Mammary epithelial cell (primary cell): ENCODE measurements at regions of chr1 and their contacts with region 1.

Region 1: GRCh38 chr1:87730274-87731216 is 401.9 kb downstream of the LMO4 start:
- DNase-seq: no peak
- H3K4me3 ChIP-seq: no peak overlapping the region
- H3K27ac ChIP-seq: no peak overlapping the region
- H3K4me1 ChIP-seq: no peaks in the 10 kb centered on the region
- H3K27me3 ChIP-seq: no peaks in the 10 kb centered on the region
- CTCF ChIP-seq: no peak

Region 2: GRCh38 chr1:87650306-87650705 is 80.2 kb before region 1 on chr1:
- CTCF ChIA-PET with region 1: no interaction called
- dilution Hi-C with region 1: loop called (anchors 5 kb)
- in situ Hi-C with region 1: no loop called
- intact Hi-C with region 1: no loop called
- DNase-seq: no peak
- H3K4me3 ChIP-seq: no peak overlapping the region
- H3K27ac ChIP-seq: no peak overlapping the region
- H3K4me1 ChIP-seq: no peaks in the 10 kb centered on the region
- H3K27me3 ChIP-seq: no peaks in the 10 kb centered on the region
- CTCF ChIP-seq: no peak

Region 3: DNA sequence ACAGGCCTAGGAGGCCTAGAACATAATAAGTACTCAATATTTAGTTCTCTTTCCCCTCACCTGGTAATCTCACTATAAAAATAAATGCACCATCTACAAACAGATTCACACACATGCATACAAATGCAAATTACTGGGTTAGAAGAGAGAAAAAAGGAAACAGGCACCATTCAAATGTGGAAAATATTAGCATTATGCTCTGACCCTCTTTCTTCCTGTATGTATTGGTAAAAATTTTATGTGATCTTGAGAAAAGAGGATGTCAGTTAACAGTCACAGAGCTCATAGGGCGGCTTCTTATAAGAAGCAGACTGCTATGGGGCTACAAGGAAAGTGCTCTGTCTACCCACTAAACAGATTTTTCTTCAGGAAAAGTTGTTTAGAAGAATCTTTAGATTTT is 163.5 kb after region 1 on chr1:
- CTCF ChIA-PET with region 1: no interaction called
- dilution Hi-C with region 1: no loop called
- in situ Hi-C with region 1: no loop called
- intact Hi-C with region 1: no loop called
- DNase-seq: no peak
- H3K4me3 ChIP-seq: no peak overlapping the region
- H3K27ac ChIP-seq: no peak overlapping the region
- H3K4me1 ChIP-seq: no peaks in the 10 kb centered on the region
- H3K27me3 ChIP-seq: no peaks in the 10 kb centered on the region
- CTCF ChIP-seq: no peak